ENCODE measurements at regions of chr19 and their contacts with region 1.

Region 1: DNA sequence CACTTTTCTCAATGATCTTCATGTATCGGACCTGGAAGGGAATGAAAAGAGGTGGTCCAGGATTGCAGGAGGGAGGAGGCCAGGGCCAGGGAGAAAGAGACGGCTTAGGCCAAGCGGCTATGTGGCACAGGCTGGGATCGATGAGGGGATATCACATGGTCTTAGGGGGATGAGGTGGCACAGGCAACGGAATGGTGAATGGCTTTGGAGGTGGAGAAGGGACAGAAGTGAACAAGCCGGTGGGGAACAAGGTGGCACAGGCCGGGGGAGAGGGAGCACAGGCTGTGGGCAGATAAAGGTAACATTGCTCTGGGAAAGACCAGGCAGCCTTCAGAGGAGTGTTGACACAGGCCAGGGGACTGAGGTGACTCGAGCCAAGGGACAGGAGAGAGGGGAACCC is 5.7 kb upstream of the CDKN2D start:
- DNase-seq: no peak
- H3K4me3 ChIP-seq: no peak overlapping the region
- H3K27ac ChIP-seq: no peak overlapping the region
- H3K4me1 ChIP-seq: peaks cover 4 to 8% of the 10 kb centered on the region in 2 donors
- H3K27me3 ChIP-seq: no peaks in the 10 kb centered on the region
- CTCF ChIP-seq: no peak
- POLR2A ChIP-seq: no peak

Region 2: DNA sequence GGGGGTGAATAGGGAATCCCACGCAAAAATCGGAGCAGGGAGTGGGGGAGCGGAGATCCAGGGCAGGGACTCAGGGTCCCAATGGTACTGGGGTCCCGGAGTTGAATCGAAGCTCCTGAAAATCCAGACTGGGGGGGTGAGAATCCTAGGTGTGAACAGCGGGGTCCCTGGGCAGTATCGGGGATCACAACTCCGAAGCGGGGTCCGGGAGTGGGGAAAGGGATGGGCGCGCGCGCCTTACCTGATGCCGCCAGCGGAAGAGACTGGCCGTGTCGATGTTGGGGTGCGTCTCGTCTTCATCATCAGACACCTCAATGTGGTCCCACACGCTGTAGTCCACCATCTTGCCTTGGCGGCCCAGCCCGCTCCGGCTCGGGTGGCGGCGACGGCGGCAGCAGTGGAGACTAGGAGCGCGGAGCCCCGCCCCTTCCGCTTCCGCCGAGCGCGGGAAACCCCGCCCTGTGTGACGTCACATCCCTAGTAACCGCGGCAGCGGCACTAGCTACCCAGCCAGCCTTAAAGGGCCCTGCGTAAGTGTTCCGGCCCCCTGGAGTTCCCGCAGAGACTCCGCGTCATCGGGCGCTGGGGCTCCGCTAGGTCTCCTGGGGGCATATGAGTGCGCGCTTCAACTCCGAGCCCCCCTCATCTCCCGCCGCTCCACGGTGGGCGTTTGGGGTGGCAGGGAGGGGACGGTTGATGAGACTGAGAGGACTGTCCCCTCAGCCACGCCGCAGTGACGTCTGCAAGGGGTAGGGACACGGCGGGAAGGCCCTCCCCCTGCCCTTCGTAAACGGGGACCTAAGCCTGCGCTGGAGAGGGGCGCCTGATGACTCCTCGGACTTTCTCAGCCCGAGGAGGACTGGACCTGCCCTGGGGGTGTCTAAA is 171.1 kb before region 1 on chr19 and contains the start of gene CDC37:
- intact Hi-C with region 1: loop called in 1 of 2 experiments (anchors 10 kb)
- DNase-seq: peak; percentile 94 to 99 (median 97)
- H3K4me3 ChIP-seq: peak within 1 kb of the TSS; percentile 59 to 98 (median 77)
- H3K27ac ChIP-seq: peak within 1 kb of the TSS in 4 of 5 donors; percentile 64 to 82 (median 70)
- H3K4me1 ChIP-seq: peaks cover 28 to 29% of the 10 kb centered on the region in 2 donors
- H3K27me3 ChIP-seq: peaks cover 6% of the 10 kb centered on the region
- CTCF ChIP-seq: peak in 1 of 6 experiments; percentile 2
- POLR2A ChIP-seq: peak; percentile 51 to 75
- total RNA-seq, gene CDC37: 72.8 to 137 (median 97.3) TPM

Measured in adrenal gland (tissue), 19 donors.